ENCODE measurements at regions of chrX and their contacts with region 1.

Region 1: DNA sequence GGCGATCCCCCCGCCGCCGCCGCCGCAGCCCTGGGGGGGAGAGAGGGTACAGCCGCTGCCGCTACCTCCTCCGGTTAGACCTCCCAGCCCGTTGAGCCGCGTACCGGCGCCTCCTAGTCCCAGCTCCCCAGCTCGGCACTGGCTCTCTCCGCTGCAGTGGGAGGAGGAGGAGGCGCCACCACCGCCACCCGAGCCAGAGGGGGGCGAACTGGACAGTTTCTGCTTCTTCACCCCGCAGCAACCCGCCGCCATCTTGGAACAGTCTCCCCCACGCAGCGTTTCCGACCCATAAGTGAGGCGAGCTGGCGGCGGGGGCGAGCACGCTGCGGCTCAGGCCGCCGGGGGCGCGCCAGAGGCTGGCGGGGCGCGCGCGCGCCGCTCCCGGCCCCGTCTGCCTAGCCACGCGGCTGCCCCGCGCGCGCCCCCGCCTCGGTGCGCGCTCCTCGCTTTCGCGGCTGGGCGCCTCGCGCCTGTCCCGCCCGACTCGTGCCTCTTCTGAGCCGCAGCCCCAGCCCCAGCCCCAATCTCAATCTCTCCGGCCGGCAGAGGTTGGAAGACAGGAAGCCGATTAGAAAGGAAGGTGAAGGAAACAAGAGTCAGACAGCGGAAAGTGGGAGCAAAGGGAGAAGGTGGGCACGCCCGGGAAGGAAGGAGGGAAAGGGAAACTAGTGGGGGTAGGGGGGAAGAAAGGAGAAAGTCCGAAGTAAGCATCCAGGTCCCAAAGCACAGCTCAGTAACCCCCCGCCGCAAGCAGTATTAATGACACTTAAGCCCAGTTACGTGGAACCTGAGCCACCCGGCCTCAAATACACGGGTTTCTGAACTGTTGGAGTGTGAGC is at the start of gene AMMECR1:
- DNase-seq: peak; percentile 79
- ATAC-seq: peak; percentile 84
- H3K4me3 ChIP-seq: peak within 1 kb of the TSS; percentile 99
- H3K27ac ChIP-seq: peak within 1 kb of the TSS; percentile 99
- H3K4me1 ChIP-seq: no peaks in the 10 kb centered on the region; the same call in 1 of the 2 replicates
- H3K27me3 ChIP-seq: peaks cover 3% of the 10 kb centered on the region; the same call in 1 of the 2 replicates
- CTCF ChIP-seq: no peak
- POLR2A ChIP-seq: peak; percentile 85
- RAD21 ChIP-seq: no peak
- total RNA-seq, gene AMMECR1: 11.3 and 19.4 TPM in 2 replicates

Region 2: DNA sequence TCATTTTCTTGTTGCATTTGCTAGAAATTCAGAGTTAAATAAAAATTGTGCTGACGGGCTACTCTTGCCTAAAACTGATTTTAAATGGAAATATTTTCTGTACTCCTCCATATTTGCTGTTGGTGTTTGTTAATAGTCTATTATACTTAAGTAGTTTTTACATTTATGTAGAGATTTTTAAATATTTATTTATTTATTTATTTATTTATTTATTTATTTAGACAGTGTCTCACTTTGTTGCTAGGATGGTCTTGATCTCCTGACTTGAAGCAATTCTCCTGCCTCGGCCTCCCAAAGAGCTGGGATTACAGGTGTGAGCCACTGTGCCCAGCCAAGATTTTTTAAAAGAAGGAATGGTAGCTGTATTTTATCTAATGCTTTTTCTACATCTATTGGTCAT is 247.1 kb before region 1 on chrX:
- CTCF ChIA-PET with region 1: no interaction called
- POLR2A ChIA-PET with region 1: no interaction called
- dilution Hi-C with region 1: no loop called
- in situ Hi-C with region 1: no loop called
- intact Hi-C with region 1: no loop called
- DNase-seq: no peak
- ATAC-seq: no peak
- H3K4me3 ChIP-seq: no peak overlapping the region
- H3K27ac ChIP-seq: no peak overlapping the region
- H3K4me1 ChIP-seq: no peaks in the 10 kb centered on the region
- H3K27me3 ChIP-seq: no peaks in the 10 kb centered on the region
- CTCF ChIP-seq: no peak
- POLR2A ChIP-seq: no peak
- RAD21 ChIP-seq: no peak

Region 3: DNA sequence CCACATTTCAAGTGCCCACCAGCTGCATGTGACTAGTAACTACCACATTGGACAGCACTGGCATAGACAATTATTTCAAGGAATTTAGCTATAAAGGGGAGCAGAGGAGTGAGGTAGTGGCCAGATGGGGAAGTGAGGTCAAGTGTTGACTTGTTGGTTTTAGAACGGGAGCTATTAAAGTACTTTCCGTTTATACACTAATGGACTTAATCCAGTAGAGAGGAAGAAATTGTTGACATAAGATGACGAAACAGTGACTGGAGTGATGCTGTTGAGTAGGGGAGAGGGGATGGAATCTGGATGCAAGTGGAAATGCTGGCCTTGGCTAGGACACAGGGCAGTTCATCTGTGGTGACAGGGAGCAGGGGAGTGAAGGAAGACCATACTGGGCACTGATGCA is 154.6 kb before region 1 on chrX:
- CTCF ChIA-PET with region 1: interaction called, 4 read pairs
- POLR2A ChIA-PET with region 1: interaction called, 5 read pairs
- dilution Hi-C with region 1: no loop called
- in situ Hi-C with region 1: no loop called
- intact Hi-C with region 1: loop called (anchors 2 kb)
- DNase-seq: peak; percentile 66
- ATAC-seq: no peak
- H3K4me3 ChIP-seq: no peak overlapping the region
- H3K27ac ChIP-seq: no peak overlapping the region
- H3K4me1 ChIP-seq: peaks cover 8% of the 10 kb centered on the region
- H3K27me3 ChIP-seq: peaks cover 3% of the 10 kb centered on the region; the same call in 1 of the 2 replicates
- CTCF ChIP-seq: no peak
- POLR2A ChIP-seq: no peak
- RAD21 ChIP-seq: no peak

Region 4: GRCh38 chrX:110180176-110180927 is 137.7 kb before region 1 on chrX:
- CTCF ChIA-PET with region 1: no interaction called
- POLR2A ChIA-PET with region 1: no interaction called
- dilution Hi-C with region 1: no loop called
- in situ Hi-C with region 1: no loop called
- intact Hi-C with region 1: loop called (anchors 5 kb)
- DNase-seq: peak; percentile 84
- ATAC-seq: peak; percentile 86
- H3K4me3 ChIP-seq: no peak overlapping the region
- H3K27ac ChIP-seq: no peak overlapping the region
- H3K4me1 ChIP-seq: peaks cover 9% of the 10 kb centered on the region
- H3K27me3 ChIP-seq: no peaks in the 10 kb centered on the region; the same call in 1 of the 2 replicates
- CTCF ChIP-seq: no peak
- POLR2A ChIP-seq: no peak
- RAD21 ChIP-seq: no peak

Region 5: GRCh38 chrX:110219920-110220319 is 98.1 kb before region 1 on chrX:
- CTCF ChIA-PET with region 1: no interaction called
- POLR2A ChIA-PET with region 1: no interaction called
- dilution Hi-C with region 1: no loop called
- in situ Hi-C with region 1: no loop called
- intact Hi-C with region 1: loop called (anchors 5 kb)
- DNase-seq: peak; percentile 69
- ATAC-seq: peak; percentile 53; the same call in 1 of the 2 replicates
- H3K4me3 ChIP-seq: no peak overlapping the region
- H3K27ac ChIP-seq: no peak overlapping the region
- H3K4me1 ChIP-seq: no peaks in the 10 kb centered on the region
- H3K27me3 ChIP-seq: no peaks in the 10 kb centered on the region
- CTCF ChIP-seq: no peak
- POLR2A ChIP-seq: no peak
- RAD21 ChIP-seq: no peak

Region 6: GRCh38 chrX:110241816-110242215 is 76.2 kb before region 1 on chrX:
- CTCF ChIA-PET with region 1: no interaction called
- POLR2A ChIA-PET with region 1: no interaction called
- dilution Hi-C with region 1: no loop called
- in situ Hi-C with region 1: no loop called
- intact Hi-C with region 1: loop called (anchors 5 kb)
- DNase-seq: peak; percentile 33
- ATAC-seq: no peak
- H3K4me3 ChIP-seq: no peak overlapping the region
- H3K27ac ChIP-seq: no peak overlapping the region
- H3K4me1 ChIP-seq: peaks cover 2% of the 10 kb centered on the region; the same call in 1 of the 2 replicates
- H3K27me3 ChIP-seq: peaks cover 1% of the 10 kb centered on the region; the same call in 1 of the 2 replicates
- CTCF ChIP-seq: no peak
- POLR2A ChIP-seq: no peak
- RAD21 ChIP-seq: no peak

Region 7: DNA sequence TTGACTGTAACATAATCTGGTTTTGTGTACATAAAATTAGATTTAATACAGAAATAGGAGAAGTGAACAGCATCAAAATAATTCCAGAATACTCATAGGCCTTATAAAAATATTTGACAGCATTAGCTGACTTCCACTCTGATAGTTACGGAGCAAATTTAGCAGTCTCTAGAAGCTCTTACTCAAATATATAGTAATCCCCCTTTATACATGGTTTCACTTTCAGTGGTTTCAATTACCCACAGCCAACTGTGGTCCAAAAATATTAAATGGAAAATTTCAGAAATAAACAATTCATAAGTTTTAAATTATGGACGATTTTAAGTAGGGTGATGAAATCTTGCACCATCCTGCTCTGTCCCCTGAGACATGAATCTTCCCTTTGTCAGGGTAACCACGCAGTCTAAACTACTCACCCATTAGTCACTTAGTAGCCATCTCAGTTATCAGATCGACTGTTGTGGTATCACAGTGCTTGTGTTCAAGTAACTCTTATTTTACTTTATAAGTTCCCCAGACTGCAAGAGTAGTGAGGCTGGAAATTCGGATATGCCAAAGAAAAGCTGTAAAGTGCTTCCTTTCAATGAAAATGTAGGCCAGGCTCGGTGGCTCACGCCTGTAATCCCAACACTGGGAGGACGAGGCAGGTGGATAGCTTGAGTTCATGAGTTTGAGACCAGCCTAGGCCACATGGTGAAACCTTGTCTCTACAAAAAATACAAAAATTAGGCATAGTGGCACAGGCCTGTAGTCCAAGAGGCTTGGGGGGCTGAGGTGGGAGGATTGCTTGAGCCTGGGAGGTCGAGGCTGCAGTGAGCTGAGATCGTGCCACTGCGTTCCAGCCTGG is 23.4 kb after region 1 on chrX:
- CTCF ChIA-PET with region 1: no interaction called
- POLR2A ChIA-PET with region 1: no interaction called
- dilution Hi-C with region 1: no loop called
- in situ Hi-C with region 1: no loop called
- intact Hi-C with region 1: loop called (anchors 2 kb)
- DNase-seq: peak; percentile 91
- ATAC-seq: peak; percentile 88
- H3K4me3 ChIP-seq: no peak overlapping the region
- H3K27ac ChIP-seq: peak overlapping the region; percentile 73
- H3K4me1 ChIP-seq: 0 out of 2 replicates have a peak, but pooled peaks cover 3% of the 10 kb centered on the region
- H3K27me3 ChIP-seq: no peaks in the 10 kb centered on the region
- CTCF ChIP-seq: no peak
- POLR2A ChIP-seq: no peak
- RAD21 ChIP-seq: no peak

Region 8: GRCh38 chrX:110407910-110408545 is 90.0 kb after region 1 on chrX:
- CTCF ChIA-PET with region 1: no interaction called
- POLR2A ChIA-PET with region 1: no interaction called
- dilution Hi-C with region 1: no loop called
- in situ Hi-C with region 1: no loop called
- intact Hi-C with region 1: loop called (anchors 2 kb)
- DNase-seq: peak; percentile 71
- ATAC-seq: peak; percentile 76
- H3K4me3 ChIP-seq: no peak overlapping the region
- H3K27ac ChIP-seq: no peak overlapping the region
- H3K4me1 ChIP-seq: peaks cover 10% of the 10 kb centered on the region
- H3K27me3 ChIP-seq: peaks cover 4% of the 10 kb centered on the region; the same call in 1 of the 2 replicates
- CTCF ChIP-seq: peak; percentile 83
- POLR2A ChIP-seq: no peak
- RAD21 ChIP-seq: peak; percentile 84